PC-9 (cell line): ENCODE measurements at regions of chr20 and their contacts with region 1.

Region 1: DNA sequence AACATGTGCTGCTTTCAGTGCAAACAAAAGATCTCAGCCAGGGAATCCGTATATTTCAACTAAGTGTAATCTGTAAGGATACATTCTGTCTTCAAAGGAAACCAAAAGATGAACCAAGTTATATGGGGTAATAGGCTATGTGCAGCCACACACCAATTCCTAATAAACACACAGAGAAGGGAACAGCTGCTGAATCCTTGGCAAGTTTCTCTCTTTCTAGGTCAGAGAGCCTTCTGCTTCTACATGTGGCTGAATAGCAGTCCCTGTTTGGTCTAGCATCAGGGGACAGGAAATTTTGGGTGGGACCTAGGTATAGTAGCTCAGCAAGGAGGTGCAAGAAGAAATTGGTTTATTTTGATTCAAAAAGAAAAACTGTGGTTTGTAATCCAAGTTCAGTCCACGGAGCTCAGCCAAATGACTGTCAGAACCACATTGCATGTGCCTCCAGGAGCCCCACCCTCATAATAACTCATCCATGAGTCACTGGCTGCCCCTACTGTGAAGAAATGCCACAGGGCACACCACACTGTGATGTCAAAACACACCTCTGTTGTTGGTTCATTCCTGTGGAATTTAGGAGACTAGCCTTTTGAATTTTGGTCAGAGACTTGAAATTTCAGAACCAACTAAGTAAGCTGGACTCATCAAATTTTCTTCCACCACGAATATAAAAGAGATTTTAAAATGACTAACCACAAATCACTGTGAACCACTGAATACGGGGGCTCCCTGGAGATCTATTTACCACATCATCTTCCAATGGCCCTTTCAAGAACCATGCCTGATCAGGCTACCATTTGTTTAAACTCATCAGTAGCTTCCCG is 21.1 kb downstream of the SPTLC3 start:
- DNase-seq: peak; percentile 86 to 95
- H3K4me3 ChIP-seq: peak overlapping the region; percentile 29; the same call in 1 of the 2 replicates
- H3K27ac ChIP-seq: peak overlapping the region; percentile 73
- H3K4me1 ChIP-seq: peaks cover 30% of the 10 kb centered on the region
- H3K27me3 ChIP-seq: no peaks in the 10 kb centered on the region
- CTCF ChIP-seq: no peak

Region 2: GRCh38 chr20:12984069-12984765 is 45.7 kb before region 1 on chr20:
- CTCF ChIA-PET with region 1: no interaction called
- POLR2A ChIA-PET with region 1: no interaction called
- intact Hi-C with region 1: loop called (anchors 2 kb)
- DNase-seq: no peak
- H3K4me3 ChIP-seq: no peak overlapping the region
- H3K27ac ChIP-seq: no peak overlapping the region; the same call in 1 of the 2 replicates
- H3K4me1 ChIP-seq: peaks cover 17% of the 10 kb centered on the region
- H3K27me3 ChIP-seq: no peaks in the 10 kb centered on the region
- CTCF ChIP-seq: no peak

Region 3: DNA sequence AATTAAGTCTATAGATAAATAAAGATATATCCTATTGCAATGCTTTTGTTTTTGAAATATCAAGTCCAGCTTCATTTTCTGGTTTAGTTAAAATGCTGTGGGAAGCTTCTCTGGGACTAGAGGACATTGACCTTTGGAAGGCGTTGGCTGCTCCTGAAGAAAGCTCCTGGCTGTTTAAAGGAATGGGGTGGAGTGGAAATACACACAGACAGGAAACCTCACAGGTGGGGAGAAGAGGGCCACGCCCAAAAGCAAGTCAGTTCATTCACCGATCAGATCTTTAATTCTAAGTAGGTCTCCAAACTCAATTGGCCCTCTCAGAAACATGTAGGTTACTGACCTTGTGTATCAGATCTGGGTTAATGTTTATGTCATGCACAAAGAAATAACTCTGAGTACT is 38.5 kb after region 1 on chr20:
- CTCF ChIA-PET with region 1: no interaction called
- POLR2A ChIA-PET with region 1: no interaction called
- intact Hi-C with region 1: loop called (anchors 1 kb)
- DNase-seq: peak; percentile 50 to 57
- H3K4me3 ChIP-seq: no peak overlapping the region
- H3K27ac ChIP-seq: no peak overlapping the region
- H3K4me1 ChIP-seq: peaks cover 14% of the 10 kb centered on the region
- H3K27me3 ChIP-seq: no peaks in the 10 kb centered on the region
- CTCF ChIP-seq: no peak